WTC11 (cell line): ENCODE measurements at regions of chr9 and their contacts with region 1.

Region 1: GRCh38 chr9:102185962-102186361 is 447.5 kb upstream of the GRIN3A start:
- DNase-seq: no peak
- ATAC-seq: no peak
- H3K4me3 Mint-ChIP-seq: no peak overlapping the region
- H3K27ac Mint-ChIP-seq: no peak overlapping the region
- H3K4me1 Mint-ChIP-seq: no peaks in the 10 kb centered on the region
- H3K27me3 Mint-ChIP-seq: no peaks in the 10 kb centered on the region
- CTCF ChIP-seq: no peak

Region 2: DNA sequence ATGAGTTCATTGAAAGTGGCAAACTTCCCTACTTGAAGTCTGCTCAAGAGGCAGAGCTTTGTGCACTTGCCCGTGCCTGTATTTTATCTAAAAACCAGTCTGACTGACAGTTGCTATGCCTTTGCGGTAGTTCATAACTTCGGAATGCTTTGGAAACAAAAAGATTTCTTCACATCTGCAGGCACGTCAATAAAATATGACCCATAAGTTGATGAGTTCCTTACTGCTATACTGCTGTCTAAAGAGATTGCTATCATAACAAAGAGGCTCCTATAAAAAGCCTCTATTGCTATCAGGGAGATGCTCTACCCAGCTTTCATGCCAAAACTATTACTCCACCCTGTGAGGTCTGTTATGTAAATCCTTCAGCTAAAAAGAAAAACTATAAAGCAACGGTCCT is 677.8 kb before region 1 on chr9:
- CTCF ChIA-PET with region 1: no interaction called
- POLR2A ChIA-PET with region 1: interaction called, 10 read pairs
- DNase-seq: no peak
- ATAC-seq: no peak
- H3K4me3 Mint-ChIP-seq: no peak overlapping the region
- H3K27ac Mint-ChIP-seq: no peak overlapping the region
- H3K4me1 Mint-ChIP-seq: peaks cover 17% of the 10 kb centered on the region
- H3K27me3 Mint-ChIP-seq: no peaks in the 10 kb centered on the region
- CTCF ChIP-seq: no peak

Region 3: DNA sequence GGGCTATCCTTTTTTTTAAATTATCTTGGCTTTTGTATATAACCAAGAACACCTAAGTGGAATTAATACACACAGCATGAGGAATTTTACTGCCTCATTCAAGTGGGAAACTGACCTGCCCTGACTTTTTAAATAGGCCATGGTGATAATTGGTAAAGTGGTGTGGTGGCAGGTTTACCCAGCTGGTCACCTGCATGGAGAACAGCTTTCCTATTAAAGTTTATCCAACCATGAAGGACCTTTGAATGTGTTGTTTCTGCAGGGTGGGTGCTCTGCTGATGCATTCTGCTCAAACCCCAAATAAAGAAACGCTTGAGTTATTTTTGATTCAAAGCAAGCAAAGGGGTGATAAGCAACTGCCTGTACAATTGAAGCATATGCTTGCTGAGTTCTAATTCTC is 186.5 kb before region 1 on chr9:
- CTCF ChIA-PET with region 1: no interaction called
- POLR2A ChIA-PET with region 1: no interaction called
- DNase-seq: no peak
- ATAC-seq: no peak
- H3K4me3 Mint-ChIP-seq: no peak overlapping the region
- H3K27ac Mint-ChIP-seq: no peak overlapping the region
- H3K4me1 Mint-ChIP-seq: no peaks in the 10 kb centered on the region
- H3K27me3 Mint-ChIP-seq: no peaks in the 10 kb centered on the region; the same call in 1 of the 2 replicates
- CTCF ChIP-seq: no peak